SK-N-SH (cell line): ENCODE measurements at regions of chr7 and their contacts with region 1.

Region 1: DNA sequence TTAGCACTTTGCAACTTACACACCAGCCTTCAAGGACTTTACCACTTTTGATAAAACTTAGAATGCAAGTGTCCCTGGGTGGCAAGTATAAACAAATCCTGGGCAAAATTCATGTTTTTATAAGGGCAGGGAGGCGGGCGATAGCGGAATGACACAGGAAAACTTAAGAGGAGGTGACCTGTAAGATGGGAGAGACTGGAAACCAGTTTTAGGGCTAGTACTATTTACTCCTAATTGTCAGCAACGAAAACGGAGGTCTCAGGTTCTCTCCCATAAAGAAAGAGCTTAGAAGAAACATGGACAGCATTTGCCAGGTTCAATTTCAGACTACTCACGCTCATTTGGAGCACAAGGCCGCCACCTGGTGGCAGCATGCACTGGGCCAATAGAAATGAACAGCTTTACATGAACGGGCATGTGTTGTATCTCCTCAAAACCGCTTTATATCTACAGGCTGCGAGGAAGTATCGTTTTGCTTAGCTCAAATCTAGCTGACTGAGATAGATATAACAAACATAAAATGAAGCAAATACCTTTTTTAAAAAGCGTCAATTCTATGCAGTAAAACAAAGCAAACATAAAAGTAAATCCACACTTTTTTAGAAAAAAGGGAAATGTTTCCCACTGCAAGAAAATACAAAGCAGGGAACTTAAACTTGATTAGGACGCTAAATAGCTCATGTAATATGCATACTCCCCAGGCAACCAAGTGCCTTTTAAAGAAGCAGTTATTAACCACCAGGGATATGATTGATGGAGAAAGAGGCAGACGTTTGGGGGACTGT is 37.6 kb upstream of the SVOPL start:
- DNase-seq: peak; percentile 83
- H3K4me3 ChIP-seq: no peak overlapping the region; a peak in 1 of 4 replicates
- H3K27ac ChIP-seq: no peak overlapping the region; a peak in 1 of 4 replicates
- H3K4me1 ChIP-seq: peaks cover 0 to 5% of the 10 kb centered on the region in 2 experiments; a peak in 2 of 4 replicates
- H3K27me3 ChIP-seq: no peaks in the 10 kb centered on the region
- CTCF ChIP-seq: peak; percentile 99
- EP300 ChIP-seq: no peak
- RAD21 ChIP-seq: peak; percentile 100

Region 2: DNA sequence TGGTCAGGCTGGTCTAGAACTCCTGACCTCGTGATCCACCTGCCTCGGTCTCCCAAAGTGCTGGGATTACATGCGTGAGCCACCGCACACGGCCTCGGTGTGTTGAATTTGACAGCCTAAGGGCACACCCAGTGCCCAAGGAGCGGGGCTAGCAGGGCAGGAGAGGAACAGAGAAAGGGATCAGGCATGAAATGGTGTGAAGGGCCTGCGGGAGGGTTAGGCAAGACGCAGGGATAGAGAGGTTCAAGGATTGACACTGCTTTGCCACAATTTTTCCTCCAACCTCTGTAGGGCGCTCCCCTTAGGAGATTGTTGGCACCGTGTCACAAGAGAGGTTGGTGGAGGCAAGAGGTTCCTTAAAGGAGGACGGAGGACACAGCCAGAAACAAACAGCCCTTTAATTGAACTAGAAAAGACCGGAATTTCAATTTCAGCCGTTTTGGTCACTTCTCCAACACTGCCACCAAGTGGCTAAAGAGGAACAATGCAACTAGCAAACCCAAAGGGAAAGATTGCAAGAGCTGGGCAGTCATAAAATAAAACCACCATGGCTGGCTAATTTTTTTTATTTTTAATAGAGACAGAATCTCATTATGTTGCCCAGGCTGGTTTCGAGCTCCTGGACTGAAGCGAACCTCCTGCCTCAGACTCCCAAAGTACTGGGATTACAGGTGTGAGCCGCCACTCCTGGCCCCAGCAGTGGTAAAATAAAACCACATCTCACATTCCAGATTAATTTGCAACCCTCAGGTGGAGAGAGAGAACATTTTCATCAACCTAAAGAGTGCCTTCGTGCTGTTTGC is 730.0 kb before region 1 on chr7:
- CTCF ChIA-PET with region 1: interaction called, 33 read pairs
- POLR2A ChIA-PET with region 1: no interaction called
- DNase-seq: peak; percentile 63
- H3K4me3 ChIP-seq: no peak overlapping the region; a peak in 1 of 4 replicates
- H3K27ac ChIP-seq: no peak overlapping the region
- H3K4me1 ChIP-seq: no peaks in the 10 kb centered on the region; a peak in 1 of 4 replicates
- H3K27me3 ChIP-seq: no peaks in the 10 kb centered on the region
- CTCF ChIP-seq: peak; percentile 99
- EP300 ChIP-seq: no peak
- RAD21 ChIP-seq: peak; percentile 98

Region 3: GRCh38 chr7:138161600-138162081 is 577.1 kb before region 1 on chr7:
- CTCF ChIA-PET with region 1: interaction called, 80 read pairs
- POLR2A ChIA-PET with region 1: interaction called, 10 read pairs
- DNase-seq: peak; percentile 91
- H3K4me3 ChIP-seq: peak overlapping the region in 1 of 2 experiments; percentile 7; a peak in 1 of 4 replicates
- H3K27ac ChIP-seq: peak overlapping the region in 1 of 2 experiments; percentile 86; a peak in 2 of 4 replicates
- H3K4me1 ChIP-seq: peaks cover 0 to 9% of the 10 kb centered on the region in 2 experiments; a peak in 2 of 4 replicates
- H3K27me3 ChIP-seq: no peaks in the 10 kb centered on the region
- CTCF ChIP-seq: peak; percentile 59
- EP300 ChIP-seq: 0 out of 4 replicates have a peak, but pooled peaks of 1 of the 2 experiments have one; percentile 31
- RAD21 ChIP-seq: peak; percentile 96

Region 4: GRCh38 chr7:138584696-138585095 is 154.0 kb before region 1 on chr7:
- CTCF ChIA-PET with region 1: interaction called, 12 read pairs
- POLR2A ChIA-PET with region 1: no interaction called
- DNase-seq: no peak
- H3K4me3 ChIP-seq: no peak overlapping the region
- H3K27ac ChIP-seq: no peak overlapping the region
- H3K4me1 ChIP-seq: no peaks in the 10 kb centered on the region
- H3K27me3 ChIP-seq: no peaks in the 10 kb centered on the region
- CTCF ChIP-seq: no peak
- EP300 ChIP-seq: no peak
- RAD21 ChIP-seq: no peak

Region 5: GRCh38 chr7:138752568-138753518 is 14.1 kb after region 1 on chr7:
- CTCF ChIA-PET with region 1: interaction called, 39 read pairs
- POLR2A ChIA-PET with region 1: no interaction called
- DNase-seq: peak; percentile 43
- H3K4me3 ChIP-seq: no peak overlapping the region
- H3K27ac ChIP-seq: no peak overlapping the region; a peak in 1 of 4 replicates
- H3K4me1 ChIP-seq: peaks cover 0 to 19% of the 10 kb centered on the region in 2 experiments; a peak in 1 of 4 replicates
- H3K27me3 ChIP-seq: no peaks in the 10 kb centered on the region
- CTCF ChIP-seq: no peak
- EP300 ChIP-seq: no peak
- RAD21 ChIP-seq: no peak